Adrenal gland (tissue), 19 donors: ENCODE measurements at regions of chr11 and their contacts with region 1.

Region 1: GRCh38 chr11:119334174-119334930 is at the start of gene RNF26:
- DNase-seq: peak; percentile 95 to 99 (median 97)
- H3K4me3 ChIP-seq: peak within 1 kb of the TSS; percentile 65 to 96 (median 84)
- H3K27ac ChIP-seq: peak within 1 kb of the TSS in 4 of 5 donors; percentile 77 to 88 (median 81)
- H3K4me1 ChIP-seq: peaks cover 9 to 30% of the 10 kb centered on the region in 2 donors
- H3K27me3 ChIP-seq: no peaks in the 10 kb centered on the region
- CTCF ChIP-seq: no peak
- POLR2A ChIP-seq: peak; percentile 30 to 70
- total RNA-seq, gene RNF26: 5.2 to 28.0 (median 19.8) TPM

Region 2: DNA sequence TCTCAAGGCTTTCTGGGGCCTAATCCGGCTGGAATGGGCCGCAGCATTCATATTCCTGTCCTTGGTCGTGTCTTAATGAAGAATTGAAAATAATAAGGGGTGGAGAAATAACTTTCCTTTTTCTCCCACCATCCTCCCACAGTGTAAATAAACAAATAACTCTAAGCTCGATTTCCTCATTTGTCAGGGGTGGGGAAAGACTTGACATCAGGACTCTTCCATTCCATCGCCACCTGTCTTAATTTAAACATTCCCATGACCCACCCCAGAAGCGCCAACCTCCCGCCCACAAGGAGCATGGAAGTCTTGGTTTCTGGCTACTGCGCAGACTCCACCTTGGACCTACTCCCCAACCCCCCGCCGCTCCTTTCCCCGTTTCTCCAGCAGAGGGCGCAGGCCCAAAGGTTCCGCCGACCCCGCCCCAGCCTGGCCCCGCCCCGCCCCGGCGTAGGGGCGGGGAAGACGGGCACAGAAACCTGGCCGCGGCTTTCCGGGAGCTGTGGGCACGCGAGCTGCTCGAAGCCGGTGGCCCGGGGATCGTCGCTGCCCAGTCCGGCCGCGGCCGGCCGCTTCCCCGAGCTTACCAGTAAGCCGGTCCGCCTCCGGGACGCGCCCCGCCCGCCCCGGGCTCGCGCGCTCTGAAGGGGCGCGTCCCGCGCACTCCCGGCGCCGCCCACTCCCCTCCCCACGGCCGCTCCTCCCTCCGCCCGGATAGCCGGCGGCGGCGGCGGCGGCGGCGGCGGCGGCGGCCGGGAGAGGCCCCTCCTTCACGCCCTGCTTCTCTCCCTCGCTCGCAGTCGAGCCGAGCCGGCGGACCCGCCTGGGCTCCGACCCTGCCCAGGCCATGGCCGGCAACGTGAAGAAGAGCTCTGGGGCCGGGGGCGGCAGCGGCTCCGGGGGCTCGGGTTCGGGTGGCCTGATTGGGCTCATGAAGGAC is 128.5 kb before region 1 on chr11 and contains the start of gene CBL:
- intact Hi-C with region 1: loop called in 1 of 2 experiments (anchors 10 kb)
- DNase-seq: peak; percentile 93 to 98 (median 96)
- H3K4me3 ChIP-seq: peak within 1 kb of the TSS; percentile 78 to 95 (median 87)
- H3K27ac ChIP-seq: peak within 1 kb of the TSS; percentile 72 to 92 (median 87)
- H3K4me1 ChIP-seq: peaks cover 7 to 33% of the 10 kb centered on the region in 2 donors
- H3K27me3 ChIP-seq: no peaks in the 10 kb centered on the region
- CTCF ChIP-seq: peak; percentile 77 to 93 (median 84)
- POLR2A ChIP-seq: peak; percentile 16 to 50
- total RNA-seq, gene CBL: 5.3 to 21.9 (median 13.8) TPM

Region 3: DNA sequence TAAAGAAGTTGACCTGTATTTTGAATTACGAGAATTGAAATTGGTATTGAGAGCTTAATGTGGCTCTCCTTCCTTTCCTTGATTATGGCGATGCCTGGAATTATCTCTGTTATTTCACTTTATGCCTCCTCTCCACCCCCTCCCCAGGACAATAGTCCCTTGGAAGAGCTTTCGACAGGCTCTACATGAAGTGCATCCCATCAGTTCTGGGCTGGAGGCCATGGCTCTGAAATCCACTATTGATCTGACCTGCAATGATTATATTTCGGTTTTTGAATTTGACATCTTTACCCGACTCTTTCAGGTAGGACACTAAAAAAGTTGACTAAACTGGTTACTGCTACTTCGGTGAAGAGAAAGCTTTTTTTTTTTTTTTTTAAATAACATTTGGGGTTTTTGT is 60.6 kb before region 1 on chr11:
- intact Hi-C with region 1: loop called in 1 of 2 experiments (anchors 10 kb)
- DNase-seq: no peak
- H3K4me3 ChIP-seq: no peak overlapping the region
- H3K27ac ChIP-seq: no peak overlapping the region
- H3K4me1 ChIP-seq: no peaks in the 10 kb centered on the region
- H3K27me3 ChIP-seq: no peaks in the 10 kb centered on the region
- CTCF ChIP-seq: no peak
- POLR2A ChIP-seq: no peak

Region 4: DNA sequence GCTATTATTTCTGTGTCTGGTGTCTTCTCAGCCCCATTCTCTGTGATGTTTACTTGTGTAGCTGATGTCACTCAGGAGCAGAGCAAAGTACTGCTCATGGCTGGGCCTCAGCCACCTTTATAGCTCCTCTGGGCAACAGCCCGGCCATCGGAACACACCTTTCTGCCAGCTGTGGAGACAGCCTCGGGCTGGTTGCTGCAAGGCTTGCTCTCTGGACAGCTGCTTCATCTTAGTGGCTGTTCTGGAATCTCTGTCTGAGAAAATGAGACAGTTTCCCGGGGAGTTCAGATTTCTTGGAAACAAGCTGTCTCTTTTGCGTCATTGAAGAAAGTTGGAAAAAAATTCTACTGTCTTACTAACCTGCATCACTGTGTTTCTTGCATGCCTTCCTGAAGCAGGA is 68.7 kb after region 1 on chr11:
- intact Hi-C with region 1: no loop called
- DNase-seq: no peak
- H3K4me3 ChIP-seq: no peak overlapping the region
- H3K27ac ChIP-seq: no peak overlapping the region
- H3K4me1 ChIP-seq: no peaks in the 10 kb centered on the region
- H3K27me3 ChIP-seq: no peaks in the 10 kb centered on the region
- CTCF ChIP-seq: no peak
- POLR2A ChIP-seq: no peak